Activated naive CD4-positive, alpha-beta T cell treated with anti-CD3 and anti-CD28 coated beads, Interleukin-2, amount 10 ng/mL, durations not matched to agents 7 days and 5 days (primary cell): ENCODE measurements at regions of chr2 and their contacts with region 1.

Region 1: GRCh38 chr2:132547074-132547687 is 122.8 kb downstream of the LYPD1 start:
- DNase-seq: peak; percentile 64
- H3K4me3 Mint-ChIP-seq: no peak overlapping the region
- H3K27ac Mint-ChIP-seq: no peak overlapping the region
- H3K4me1 Mint-ChIP-seq: no peaks in the 10 kb centered on the region
- H3K27me3 Mint-ChIP-seq: no peaks in the 10 kb centered on the region

Region 2: GRCh38 chr2:133844214-133844892 is 1297.2 kb after region 1 on chr2:
- CTCF ChIA-PET with region 1: interaction called, 14 read pairs
- DNase-seq: peak; percentile 68
- H3K4me3 Mint-ChIP-seq: no peak overlapping the region
- H3K27ac Mint-ChIP-seq: no peak overlapping the region
- H3K4me1 Mint-ChIP-seq: no peaks in the 10 kb centered on the region
- H3K27me3 Mint-ChIP-seq: peaks cover 4% of the 10 kb centered on the region